ENCODE measurements at regions of chr22 and their contacts with region 1.

Region 1: DNA sequence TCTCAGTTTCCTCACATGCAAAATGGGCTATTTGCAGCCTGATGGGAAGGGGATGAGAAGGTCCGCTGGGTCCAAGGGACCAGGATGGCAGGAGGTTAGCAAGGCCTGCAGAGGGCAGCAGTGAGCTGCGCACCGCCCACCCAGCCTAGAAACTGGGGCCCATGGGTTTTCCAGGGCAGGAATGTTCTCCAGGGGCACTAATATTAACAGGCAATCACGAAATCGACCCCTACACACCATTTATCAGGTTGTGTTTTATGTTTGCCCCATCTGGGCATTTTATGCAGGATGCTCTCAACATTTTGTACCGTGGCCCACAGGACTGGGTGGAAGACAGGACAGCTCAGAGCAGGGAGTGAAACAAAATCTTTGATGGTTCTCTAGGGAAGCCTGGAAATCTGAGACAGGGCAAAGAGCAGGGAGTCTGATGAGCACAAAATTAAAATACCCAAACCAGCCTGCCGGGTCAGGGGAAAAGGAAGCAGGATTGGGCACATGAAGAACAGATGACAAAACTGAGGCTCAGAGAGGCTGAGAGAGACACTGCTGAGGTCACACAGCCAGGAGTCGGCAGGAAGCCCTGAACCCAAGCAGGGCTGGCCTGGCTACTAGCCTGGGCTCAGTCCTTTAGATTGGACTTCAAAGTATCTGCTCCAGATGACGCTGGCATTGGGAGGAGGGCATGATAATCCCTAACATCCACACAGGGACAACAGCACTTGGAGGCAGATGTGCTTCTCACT is 1.6 kb upstream of the BCR start:
- DNase-seq: peak; percentile 88
- ATAC-seq: peak; percentile 62

Region 2: DNA sequence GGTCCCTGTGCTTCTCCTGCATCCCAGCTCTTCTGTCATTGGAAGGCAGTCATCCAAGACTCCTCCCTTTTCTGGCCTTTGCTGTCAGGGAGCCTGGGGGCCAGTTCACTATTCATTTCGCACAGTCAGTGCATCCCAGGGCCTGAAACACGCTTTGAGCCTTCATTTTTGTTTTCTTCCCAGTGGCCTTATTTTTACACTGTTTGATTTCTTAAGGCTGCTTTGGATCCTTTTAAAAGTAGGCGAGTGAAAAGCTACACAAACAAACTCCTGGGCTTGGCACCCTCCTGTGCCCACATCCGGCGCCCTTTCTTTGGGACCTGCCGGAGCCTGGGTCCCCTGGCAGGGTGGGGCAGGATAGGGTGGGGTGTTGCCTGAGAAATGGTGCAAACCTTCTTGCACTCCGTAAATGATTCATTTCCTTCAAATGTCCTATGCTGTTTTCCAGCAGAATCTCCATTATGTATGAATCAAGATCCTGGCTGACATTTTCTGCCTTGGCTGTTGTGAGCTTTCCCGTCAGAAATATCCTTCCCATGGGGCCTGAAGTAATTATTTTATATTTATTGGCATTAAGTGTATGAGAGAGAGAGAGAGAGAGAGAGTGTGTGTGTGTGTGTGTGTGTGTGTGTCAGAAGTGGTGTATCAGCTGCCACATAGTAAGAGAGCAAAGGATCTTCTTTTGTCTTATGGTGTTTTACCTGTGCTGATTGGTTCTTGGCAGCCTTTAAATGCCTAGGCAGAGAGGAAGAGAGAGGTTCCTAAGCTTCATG is 47.2 kb after region 1 on chr22:
- intact Hi-C with region 1: loop called (anchors 5 kb)
- DNase-seq: peak; percentile 84
- ATAC-seq: peak; percentile 70

Region 3: GRCh38 chr22:23281406-23282088 is 102.9 kb after region 1 on chr22:
- intact Hi-C with region 1: loop called (anchors 1 kb)
- DNase-seq: peak; percentile 89
- ATAC-seq: peak; percentile 77

Region 4: DNA sequence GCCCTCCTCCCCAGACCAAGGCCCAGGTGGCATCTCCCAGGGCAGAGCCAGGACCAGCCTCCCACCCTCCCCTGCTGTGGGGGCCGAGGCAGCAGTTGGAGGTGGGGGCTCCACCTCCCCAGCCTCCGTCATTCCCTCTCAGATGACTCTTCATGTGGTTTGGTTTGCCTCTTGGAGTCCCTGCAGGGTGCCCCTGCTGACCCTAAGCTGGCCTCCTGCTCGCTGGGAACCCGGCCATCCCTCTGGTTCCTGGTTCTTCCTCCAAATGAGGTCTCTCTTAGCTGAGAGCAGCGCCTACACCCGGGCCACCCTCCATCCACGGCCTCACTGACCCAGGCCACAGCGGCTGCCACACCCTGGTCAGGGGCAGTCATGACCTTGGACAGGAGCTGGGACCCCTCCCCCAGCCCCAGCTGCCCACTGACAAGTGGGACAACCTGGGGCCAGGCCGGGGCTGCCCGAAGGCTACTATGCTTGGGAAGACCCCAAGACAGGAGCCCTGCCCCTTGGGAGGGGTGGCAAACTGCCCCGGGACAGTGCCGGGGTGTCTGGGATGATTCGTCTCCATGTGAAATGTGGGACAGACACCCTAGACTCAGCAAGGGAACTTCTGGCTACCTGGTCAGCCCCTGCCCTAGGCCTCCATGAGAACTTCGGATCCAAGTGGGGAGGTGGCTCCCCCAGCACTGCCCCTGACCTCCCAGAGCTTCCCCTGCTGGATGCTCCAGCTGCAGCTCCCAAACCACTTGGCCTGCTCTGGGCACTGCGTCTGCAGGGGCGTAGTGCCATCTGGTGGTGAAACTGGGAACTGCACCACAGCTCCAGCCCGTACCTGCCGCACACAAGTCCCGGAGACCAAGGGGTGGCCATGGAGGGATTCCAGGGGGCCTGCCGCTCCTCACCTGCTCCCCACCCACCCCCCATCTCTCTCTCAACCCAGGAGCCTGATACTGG is 206.9 kb after region 1 on chr22:
- intact Hi-C with region 1: loop called (anchors 1 kb)
- DNase-seq: peak; percentile 87
- ATAC-seq: peak; percentile 76

Region 5: GRCh38 chr22:23539135-23539838 is 360.6 kb after region 1 on chr22:
- intact Hi-C with region 1: loop called (anchors 10 kb)
- DNase-seq: peak; percentile 89
- ATAC-seq: peak; percentile 98

Measured in Right ventricle myocardium inferior (tissue), 1 donor.